Dorsolateral prefrontal cortex (tissue), 120 donors: ENCODE measurements at regions of chr19 and their contacts with region 1.

Region 1: DNA sequence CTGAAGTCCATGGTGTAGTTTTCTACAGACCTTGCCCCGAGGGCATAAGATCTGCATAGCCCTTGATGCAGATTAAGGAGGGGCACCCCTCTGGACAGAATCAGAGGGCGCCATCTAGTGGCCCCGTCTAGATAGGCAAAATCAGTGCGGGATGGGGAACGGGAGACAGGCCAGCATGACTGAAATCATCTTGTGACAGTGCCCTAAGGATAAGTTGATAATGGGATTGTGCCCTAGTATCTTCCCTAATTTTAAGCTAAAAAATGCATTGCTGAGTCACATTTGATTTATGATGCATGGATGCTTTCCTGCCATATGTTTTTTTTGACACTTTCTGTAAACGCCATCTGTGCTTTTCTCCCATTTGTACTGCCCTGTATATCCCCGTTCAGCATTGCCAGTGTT is 19.0 kb upstream of the GPI start:
- DNase-seq: peak in 9 of 10 donors; percentile 65 to 91 (median 78)
- H3K4me3 ChIP-seq: no peak overlapping the region
- H3K27ac ChIP-seq: peak overlapping the region in 26 of 59 donors; percentile 2 to 86 (median 26)
- H3K27me3 ChIP-seq: no peaks in the 10 kb centered on the region
- CTCF ChIP-seq: peak; percentile 63 to 92 (median 84)

Region 2: DNA sequence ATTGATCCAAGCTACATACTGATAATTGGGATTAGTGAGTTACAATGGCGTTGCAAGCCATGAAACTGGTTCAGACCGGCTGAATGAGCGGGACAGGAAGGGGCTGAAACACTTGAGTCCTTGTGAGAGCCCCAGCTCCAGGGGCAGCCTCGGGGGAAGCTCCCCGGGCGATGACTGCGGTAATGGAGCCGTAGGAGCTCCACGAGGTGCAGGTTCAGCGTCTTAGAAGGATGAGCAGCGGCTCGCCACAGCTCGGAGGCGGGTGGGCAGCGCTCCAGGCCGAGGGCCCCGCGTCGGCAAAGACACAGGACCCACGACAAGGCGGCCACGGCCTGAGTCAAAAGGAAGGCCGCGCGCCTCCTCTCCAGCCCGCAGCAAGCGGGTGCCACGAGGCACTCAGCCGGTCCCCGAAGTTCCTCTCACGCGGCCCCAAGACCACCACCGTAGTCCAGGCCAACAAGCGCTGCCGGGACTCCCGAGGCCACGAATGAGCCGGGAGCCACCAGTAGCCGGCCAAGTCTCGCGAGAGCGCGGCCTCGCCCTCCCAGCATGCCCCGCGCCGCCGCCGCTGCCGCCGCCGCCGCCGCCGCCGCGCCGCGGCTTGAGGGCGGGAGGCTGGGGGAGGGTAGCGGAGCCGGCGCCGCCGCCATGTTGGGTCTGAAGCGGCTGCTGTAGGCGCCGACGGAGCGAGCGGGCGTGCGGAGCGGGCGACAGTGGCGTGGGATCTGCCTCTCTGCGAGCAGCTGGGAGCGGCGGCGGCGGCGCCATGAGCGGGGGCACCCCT is 173.9 kb before region 1 on chr19 and contains the start of gene LSM14A:
- intact Hi-C with region 1: loop called in 1 of 2 experiments (anchors 2 kb)
- DNase-seq: peak; percentile 71 to 93 (median 82)
- H3K4me3 ChIP-seq: peak within 1 kb of the TSS; percentile 74 to 99 (median 94)
- H3K27ac ChIP-seq: peak within 1 kb of the TSS; percentile 91 to 100 (median 99)
- H3K27me3 ChIP-seq: no peaks in the 10 kb centered on the region
- CTCF ChIP-seq: peak in 14 of 56 donors; percentile 6 to 30 (median 14)
- total RNA-seq, gene LSM14A: 52.9 to 108 (median 72.5) TPM

Region 3: DNA sequence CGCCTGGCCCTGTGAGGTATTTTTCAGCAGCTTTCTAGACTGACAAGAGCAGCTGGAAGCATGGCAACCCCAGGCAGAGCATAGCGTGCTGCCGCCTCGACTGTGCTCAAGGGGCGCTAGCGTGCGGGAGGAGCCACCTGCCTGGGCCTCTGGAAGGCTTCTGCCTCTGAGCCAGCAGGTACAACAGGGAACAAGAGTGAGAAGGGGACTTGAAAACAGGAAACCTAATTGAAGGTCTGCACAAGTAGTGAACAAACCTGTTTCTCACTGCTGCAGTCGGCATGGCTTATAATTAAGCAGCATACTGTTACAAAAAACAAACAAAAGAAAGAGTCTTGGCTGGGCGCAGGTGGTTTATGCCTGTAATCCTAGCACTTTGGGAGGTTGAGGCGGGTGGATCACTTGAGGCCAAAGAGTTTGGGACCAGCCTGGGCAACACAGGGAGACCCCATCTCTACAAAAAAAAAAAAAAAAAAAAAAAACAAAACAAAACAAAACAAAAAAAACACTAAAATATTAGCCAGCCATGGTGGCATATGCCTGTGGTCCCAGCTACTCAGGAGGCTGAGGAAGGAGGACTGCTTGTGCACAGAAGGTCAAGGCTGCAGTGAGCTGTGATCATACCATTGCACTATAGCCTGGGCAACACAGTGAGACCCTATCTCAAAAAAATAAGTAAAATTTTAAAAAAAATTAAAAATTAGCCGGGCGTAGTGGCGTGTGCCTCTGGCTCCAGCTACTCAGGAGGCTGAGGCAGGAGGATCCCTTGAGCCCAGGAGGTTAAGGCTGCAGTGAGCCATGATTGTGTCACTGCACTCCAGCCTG is 104.2 kb before region 1 on chr19:
- intact Hi-C with region 1: loop called in 1 of 2 experiments (anchors 10 kb)
- DNase-seq: no peak
- H3K4me3 ChIP-seq: no peak overlapping the region
- H3K27ac ChIP-seq: no peak overlapping the region
- H3K27me3 ChIP-seq: no peaks in the 10 kb centered on the region
- CTCF ChIP-seq: no peak

Region 4: GRCh38 chr19:34253699-34254551 is 92.0 kb before region 1 on chr19:
- intact Hi-C with region 1: loop called (anchors 10 kb)
- DNase-seq: peak; percentile 74 to 92 (median 86)
- H3K4me3 ChIP-seq: peak overlapping the region; percentile 55 to 100 (median 94)
- H3K27ac ChIP-seq: peak overlapping the region; percentile 30 to 99 (median 96)
- H3K27me3 ChIP-seq: no peaks in the 10 kb centered on the region
- CTCF ChIP-seq: peak in 17 of 56 donors; percentile 3 to 35 (median 16)